Breast epithelium (tissue), 4 donors: ENCODE measurements at regions of chr20 and their contacts with region 1.

Region 1: GRCh38 chr20:23357767-23358591 is 4.0 kb upstream of the GZF1 start:
- DNase-seq: peak; percentile 100
- H3K4me3 ChIP-seq: peak overlapping the region; percentile 51 to 76 (median 74)
- H3K27ac ChIP-seq: peak overlapping the region; percentile 94 to 98
- H3K4me1 ChIP-seq: peaks cover 0 to 3% of the 10 kb centered on the region in 2 donors
- H3K27me3 ChIP-seq: no peaks in the 10 kb centered on the region
- CTCF ChIP-seq: peak in 1 of 3 donors; percentile 11
- POLR2A ChIP-seq: peak; percentile 39

Region 2: GRCh38 chr20:22775671-22776139 is 582.3 kb before region 1 on chr20:
- intact Hi-C with region 1: no loop called
- DNase-seq: no peak
- H3K4me3 ChIP-seq: no peak overlapping the region
- H3K27ac ChIP-seq: no peak overlapping the region
- H3K4me1 ChIP-seq: no peaks in the 10 kb centered on the region
- H3K27me3 ChIP-seq: no peaks in the 10 kb centered on the region
- CTCF ChIP-seq: no peak
- POLR2A ChIP-seq: no peak

Region 3: DNA sequence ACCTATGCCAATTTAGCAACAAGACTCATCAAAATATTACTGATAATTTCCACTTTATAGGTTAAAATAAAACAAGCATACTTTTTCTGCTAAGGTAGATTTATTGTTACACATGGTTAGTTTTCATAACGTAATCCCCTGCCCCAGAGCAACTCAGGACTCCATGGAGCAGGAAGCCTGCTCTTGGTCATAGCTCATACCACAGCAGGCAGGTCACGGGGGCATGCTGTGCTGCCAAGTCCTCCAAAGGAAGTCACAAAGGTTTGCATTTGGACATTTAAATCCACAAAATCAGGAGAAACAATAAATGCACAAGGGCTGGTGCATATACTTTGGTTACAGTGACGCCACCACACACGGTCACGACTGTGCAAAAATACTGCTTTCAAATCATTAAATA is 16.5 kb after region 1 on chr20:
- intact Hi-C with region 1: no loop called
- DNase-seq: no peak
- H3K4me3 ChIP-seq: no peak overlapping the region
- H3K27ac ChIP-seq: no peak overlapping the region
- H3K4me1 ChIP-seq: no peaks in the 10 kb centered on the region
- H3K27me3 ChIP-seq: no peaks in the 10 kb centered on the region
- CTCF ChIP-seq: no peak
- POLR2A ChIP-seq: no peak

Region 4: GRCh38 chr20:23641936-23642751 is 284.2 kb after region 1 on chr20:
- intact Hi-C with region 1: loop called (anchors 5 kb)
- DNase-seq: no peak
- H3K4me3 ChIP-seq: no peak overlapping the region
- H3K27ac ChIP-seq: no peak overlapping the region
- H3K4me1 ChIP-seq: no peaks in the 10 kb centered on the region
- H3K27me3 ChIP-seq: no peaks in the 10 kb centered on the region
- CTCF ChIP-seq: no peak
- POLR2A ChIP-seq: no peak

Region 5: DNA sequence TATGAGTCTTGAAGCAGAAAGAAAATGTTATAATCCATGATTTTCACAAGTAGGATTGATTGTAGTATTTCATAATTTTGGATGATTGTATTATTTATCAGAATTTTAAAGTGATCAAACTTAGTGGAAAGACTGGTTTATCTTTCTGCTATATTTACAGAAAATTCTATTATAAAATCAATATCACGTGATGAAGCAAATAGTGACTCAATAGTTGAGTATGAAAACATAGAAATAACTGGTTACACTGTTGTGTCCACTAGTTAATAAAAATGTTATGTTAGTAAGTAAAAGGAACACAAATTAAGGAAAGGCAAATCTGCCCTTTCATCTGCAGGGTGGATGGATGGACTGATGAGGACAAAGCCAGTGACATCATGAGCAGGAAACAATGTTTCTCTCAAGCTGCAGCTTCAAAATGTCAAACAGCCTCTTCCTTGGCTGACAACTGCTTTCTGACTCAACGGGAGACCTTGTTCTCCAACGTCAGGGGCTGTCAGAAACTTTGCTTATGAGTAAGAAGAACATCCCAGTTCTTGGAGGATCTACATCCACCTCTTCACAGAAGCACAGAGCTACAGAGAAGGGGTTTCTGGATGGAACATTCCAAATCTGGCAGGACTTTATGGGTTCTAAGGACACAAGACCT is 462.4 kb after region 1 on chr20:
- intact Hi-C with region 1: no loop called
- DNase-seq: no peak
- H3K4me3 ChIP-seq: no peak overlapping the region
- H3K27ac ChIP-seq: no peak overlapping the region
- H3K4me1 ChIP-seq: no peaks in the 10 kb centered on the region
- H3K27me3 ChIP-seq: no peaks in the 10 kb centered on the region
- CTCF ChIP-seq: no peak
- POLR2A ChIP-seq: no peak